IMR-90 (cell line): ENCODE measurements at regions of chr9 and their contacts with region 1.

Region 1: DNA sequence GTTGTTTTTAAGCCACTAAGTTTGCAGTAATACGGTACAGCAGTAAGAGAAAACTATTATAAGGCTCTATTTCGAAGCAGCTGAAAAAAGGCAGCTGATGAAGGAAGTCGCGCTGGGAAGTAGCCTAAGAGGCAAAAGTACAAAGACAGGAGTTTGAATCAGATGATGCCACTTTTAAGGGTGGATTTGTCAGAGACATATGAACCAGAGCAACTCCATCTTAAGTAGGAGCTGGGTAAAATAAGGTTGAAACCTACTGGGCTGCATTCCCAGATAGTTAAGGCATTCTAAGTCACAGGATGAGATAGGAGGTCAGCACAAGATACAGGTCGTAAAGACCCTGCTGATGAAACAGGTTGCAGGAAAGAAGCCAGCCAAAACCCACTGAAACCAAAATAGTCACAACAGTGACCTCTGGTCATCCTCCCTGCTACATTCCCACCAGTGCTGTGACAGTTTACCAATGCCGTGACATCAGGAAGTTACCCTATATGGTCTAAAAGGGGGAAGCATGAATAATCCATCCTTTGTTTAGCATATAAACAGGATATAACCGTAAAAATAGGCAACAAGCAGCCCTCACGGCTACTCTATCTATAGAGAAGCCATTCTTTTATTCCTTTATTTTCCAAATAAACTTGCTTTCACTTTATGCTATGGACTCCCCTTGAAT is 91.8 kb upstream of the PRSS3 start:
- DNase-seq: no peak
- ATAC-seq: no peak
- H3K4me3 ChIP-seq: no peak overlapping the region
- H3K27ac ChIP-seq: no peak overlapping the region
- H3K4me1 ChIP-seq: no peaks in the 10 kb centered on the region
- H3K27me3 ChIP-seq: peaks cover 8% of the 10 kb centered on the region
- CTCF ChIP-seq: no peak
- POLR2A ChIP-seq: no peak
- RAD21 ChIP-seq: no peak

Region 2: DNA sequence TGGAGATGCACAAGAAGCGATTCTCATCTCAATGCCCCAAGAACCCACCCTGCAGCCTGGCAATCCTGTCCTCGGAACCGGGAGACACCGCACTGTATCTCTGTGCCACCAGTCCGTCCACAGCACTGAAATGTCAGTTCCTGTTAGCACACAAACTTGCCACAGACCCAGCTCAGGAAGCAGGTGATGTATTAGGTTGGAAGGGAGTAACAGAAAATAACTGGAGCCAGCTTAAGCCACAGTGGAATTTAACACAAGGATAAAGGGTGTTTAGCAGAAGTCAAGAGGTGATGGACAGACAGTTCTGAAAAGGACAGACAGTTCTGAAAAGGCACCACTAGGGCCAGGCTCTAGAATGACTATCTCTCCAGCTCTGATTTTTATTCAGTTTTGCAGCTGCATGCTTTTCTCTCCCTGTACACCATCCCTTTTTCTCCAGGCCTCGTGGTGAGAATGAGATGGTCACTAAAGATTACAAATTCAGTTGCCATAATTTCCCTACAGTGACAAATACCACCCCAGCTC is 65.1 kb before region 1 on chr9:
- CTCF ChIA-PET with region 1: no interaction called
- POLR2A ChIA-PET with region 1: no interaction called
- dilution Hi-C with region 1: no loop called
- in situ Hi-C with region 1: loop called (anchors 10 kb)
- intact Hi-C with region 1: no loop called
- DNase-seq: no peak
- ATAC-seq: no peak
- H3K4me3 ChIP-seq: no peak overlapping the region
- H3K27ac ChIP-seq: no peak overlapping the region
- H3K4me1 ChIP-seq: no peaks in the 10 kb centered on the region
- H3K27me3 ChIP-seq: peaks cover 41% of the 10 kb centered on the region
- CTCF ChIP-seq: no peak
- POLR2A ChIP-seq: no peak
- RAD21 ChIP-seq: no peak

Region 3: DNA sequence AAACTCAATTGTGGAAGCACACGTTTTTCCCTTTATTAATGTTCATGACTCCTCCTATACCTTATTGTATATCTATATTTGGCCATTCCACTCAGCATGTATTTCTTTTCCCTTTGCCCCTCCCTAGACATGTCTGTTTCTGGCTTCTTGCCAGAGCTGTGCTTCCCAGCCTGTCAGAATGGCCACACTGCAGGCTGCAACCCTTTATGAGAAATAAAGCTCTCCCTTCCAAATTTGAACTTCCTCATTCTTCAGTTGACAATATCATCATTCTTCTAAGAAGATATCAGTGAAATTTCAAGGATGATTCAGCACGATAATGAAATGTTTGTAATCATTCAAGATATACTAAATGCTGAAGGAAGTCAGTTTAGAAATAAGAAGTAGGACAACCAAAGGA is 15.8 kb before region 1 on chr9:
- CTCF ChIA-PET with region 1: no interaction called
- POLR2A ChIA-PET with region 1: no interaction called
- dilution Hi-C with region 1: no loop called
- in situ Hi-C with region 1: no loop called
- intact Hi-C with region 1: loop called (anchors 2 kb)
- DNase-seq: peak; percentile 7
- ATAC-seq: no peak
- H3K4me3 ChIP-seq: no peak overlapping the region
- H3K27ac ChIP-seq: no peak overlapping the region
- H3K4me1 ChIP-seq: no peaks in the 10 kb centered on the region
- H3K27me3 ChIP-seq: peaks cover 10% of the 10 kb centered on the region
- CTCF ChIP-seq: no peak
- POLR2A ChIP-seq: no peak
- RAD21 ChIP-seq: no peak